ENCODE measurements at regions of chr15 and their contacts with region 1.

Region 1: DNA sequence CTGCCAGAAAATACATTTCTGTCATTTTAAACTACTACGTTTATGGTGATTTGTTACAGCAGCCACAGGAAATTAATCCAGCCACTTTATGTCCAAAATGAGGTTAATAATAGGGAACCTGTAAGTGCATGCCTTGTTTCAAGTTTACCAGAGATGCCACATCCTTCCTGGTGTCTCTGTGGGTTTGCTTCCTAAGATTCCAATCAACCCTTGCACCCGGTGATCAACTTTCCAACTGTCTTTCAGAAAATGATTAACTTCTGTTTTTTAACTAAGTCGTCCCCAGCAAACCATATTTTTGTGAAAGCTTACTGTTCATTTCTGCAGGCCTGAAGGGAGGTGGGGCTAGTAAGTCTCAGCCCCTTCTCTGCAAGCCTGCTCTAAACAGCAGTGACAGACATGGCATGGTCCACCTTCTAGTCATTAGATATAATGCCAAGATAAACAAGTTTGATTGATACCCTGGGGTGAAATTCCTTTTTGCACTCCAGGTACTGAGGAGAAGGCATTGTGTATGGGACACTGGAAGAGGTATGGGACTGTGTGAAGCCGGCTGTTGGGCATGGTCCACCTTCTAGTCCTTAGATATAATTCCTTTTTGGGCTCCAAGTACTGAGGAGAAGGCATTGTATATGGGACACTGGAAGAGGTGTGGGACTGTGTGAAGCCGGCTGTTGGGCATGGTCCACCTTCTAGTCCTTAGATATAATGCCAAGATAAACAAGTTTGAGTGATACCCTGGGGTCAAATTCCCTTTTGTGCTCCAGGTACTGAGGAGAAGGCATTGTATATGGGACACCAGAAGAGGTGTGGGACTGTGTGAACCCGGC is 11.1 kb upstream of the TMC3 start:
- DNase-seq: no peak
- ATAC-seq: no peak
- H3K4me3 ChIP-seq: no peak overlapping the region
- H3K27ac ChIP-seq: no peak overlapping the region
- H3K4me1 ChIP-seq: peaks cover 5% of the 10 kb centered on the region; the same call in 1 of the 2 replicates
- H3K27me3 ChIP-seq: peaks cover 2% of the 10 kb centered on the region; the same call in 1 of the 2 replicates
- CTCF ChIP-seq: no peak
- POLR2A ChIP-seq: no peak
- RAD21 ChIP-seq: no peak

Region 2: DNA sequence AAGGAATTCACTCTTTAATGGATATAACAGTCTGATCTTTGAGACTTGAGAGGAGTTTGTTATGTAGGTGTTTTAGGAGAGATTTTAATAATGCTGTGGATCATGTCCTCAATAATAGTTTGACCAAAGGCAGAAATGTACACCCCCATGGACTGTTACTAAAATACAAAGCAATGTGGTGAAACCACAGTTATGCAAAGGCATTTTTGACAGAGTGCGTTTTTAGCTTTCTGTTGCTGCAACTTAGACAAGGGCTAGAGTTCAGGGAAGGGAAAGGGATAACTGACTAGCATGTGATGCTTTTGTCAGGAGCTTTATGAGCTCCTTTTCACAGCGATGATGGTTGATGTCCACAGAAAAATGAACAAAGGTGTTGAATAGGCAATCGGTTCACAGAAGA is 57.6 kb before region 1 on chr15:
- CTCF ChIA-PET with region 1: no interaction called
- POLR2A ChIA-PET with region 1: no interaction called
- dilution Hi-C with region 1: no loop called
- in situ Hi-C with region 1: no loop called
- intact Hi-C with region 1: loop called (anchors 5 kb)
- DNase-seq: peak; percentile 91
- ATAC-seq: peak; percentile 41
- H3K4me3 ChIP-seq: no peak overlapping the region
- H3K27ac ChIP-seq: peak overlapping the region; percentile 86; the same call in 1 of the 2 replicates
- H3K4me1 ChIP-seq: peaks cover 25% of the 10 kb centered on the region
- H3K27me3 ChIP-seq: no peaks in the 10 kb centered on the region
- CTCF ChIP-seq: no peak
- POLR2A ChIP-seq: no peak
- RAD21 ChIP-seq: no peak

Region 3: DNA sequence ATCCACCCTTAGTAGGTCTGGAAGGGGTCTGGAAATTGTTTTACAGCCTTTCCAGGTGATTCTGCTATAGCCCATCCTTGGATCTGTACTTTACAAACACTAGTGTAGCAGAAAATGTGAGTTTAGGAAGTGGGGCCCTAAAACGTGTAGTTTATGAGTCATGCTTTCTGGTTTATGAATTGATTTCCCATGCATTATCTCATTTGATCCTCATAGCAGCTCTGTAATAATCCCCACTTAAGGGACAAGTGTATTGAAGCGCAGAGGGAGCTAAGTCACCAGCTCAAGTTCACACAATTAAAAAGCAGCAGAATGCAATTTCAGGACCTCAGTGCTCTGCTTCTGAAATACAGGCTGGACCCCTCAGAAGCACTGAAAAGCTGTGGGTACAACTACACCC is 38.5 kb before region 1 on chr15:
- CTCF ChIA-PET with region 1: no interaction called
- POLR2A ChIA-PET with region 1: no interaction called
- dilution Hi-C with region 1: no loop called
- in situ Hi-C with region 1: loop called (anchors 10 kb)
- intact Hi-C with region 1: loop called (anchors 5 kb)
- DNase-seq: no peak
- ATAC-seq: peak; percentile 21; the same call in 1 of the 2 replicates
- H3K4me3 ChIP-seq: no peak overlapping the region
- H3K27ac ChIP-seq: no peak overlapping the region
- H3K4me1 ChIP-seq: no peaks in the 10 kb centered on the region
- H3K27me3 ChIP-seq: no peaks in the 10 kb centered on the region; the same call in none of the 2 replicates
- CTCF ChIP-seq: no peak
- POLR2A ChIP-seq: no peak
- RAD21 ChIP-seq: no peak

Region 4: GRCh38 chr15:81492331-81492963 is 107.3 kb after region 1 on chr15:
- CTCF ChIA-PET with region 1: no interaction called
- POLR2A ChIA-PET with region 1: no interaction called
- dilution Hi-C with region 1: no loop called
- in situ Hi-C with region 1: no loop called
- intact Hi-C with region 1: no loop called
- DNase-seq: peak; percentile 66
- ATAC-seq: no peak
- H3K4me3 ChIP-seq: no peak overlapping the region
- H3K27ac ChIP-seq: no peak overlapping the region
- H3K4me1 ChIP-seq: peaks cover 1% of the 10 kb centered on the region; the same call in 1 of the 2 replicates
- H3K27me3 ChIP-seq: no peaks in the 10 kb centered on the region
- CTCF ChIP-seq: no peak
- POLR2A ChIP-seq: no peak
- RAD21 ChIP-seq: no peak

Measured in IMR-90 (cell line).